ENCODE measurements at regions of chr17 and their contacts with region 1.

Region 1: DNA sequence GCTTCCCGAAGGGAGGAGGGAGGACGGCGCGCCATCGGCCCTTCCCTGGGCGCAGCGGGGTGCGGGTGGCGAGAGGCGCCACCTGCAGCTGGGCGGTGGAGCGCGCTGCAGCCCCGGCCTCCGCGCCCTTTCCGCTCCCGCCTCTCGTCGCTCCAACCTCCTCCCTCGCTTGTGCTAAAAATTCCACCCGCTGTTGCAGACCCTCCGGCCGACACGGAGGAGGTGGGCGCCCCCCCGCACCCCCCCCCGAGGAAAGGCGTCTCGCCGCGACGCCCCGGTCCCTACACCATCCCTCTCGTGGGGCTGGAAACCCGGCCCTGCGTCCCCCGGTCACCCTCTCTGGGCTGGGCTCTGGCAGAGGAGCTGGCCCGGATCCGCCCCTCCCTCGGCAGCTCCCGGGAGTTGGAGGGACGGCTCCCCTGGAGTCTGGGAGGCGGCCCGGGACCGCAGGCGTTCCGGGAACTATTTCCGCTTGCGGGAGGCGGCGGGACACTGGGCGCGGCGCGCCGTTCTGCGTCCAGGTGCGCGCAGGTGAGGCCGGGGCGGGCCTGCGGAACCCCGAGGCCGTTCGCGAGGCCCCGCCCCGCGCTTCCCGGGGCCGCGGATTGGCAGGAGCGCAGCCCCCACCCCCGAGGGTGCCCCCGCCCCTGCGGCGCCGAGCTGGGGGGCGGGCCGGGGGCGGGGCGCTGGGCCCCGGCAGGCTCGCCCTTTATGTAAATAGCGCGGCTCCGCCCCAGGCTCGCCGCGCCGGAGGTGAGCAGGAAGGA is at the start of gene LLGL2:
- DNase-seq: peak; percentile 94
- ATAC-seq: peak; percentile 93
- H3K4me3 ChIP-seq: peak within 1 kb of the TSS; percentile 70
- H3K27ac ChIP-seq: peak within 1 kb of the TSS; percentile 80
- H3K4me1 ChIP-seq: peaks cover 14% of the 10 kb centered on the region
- H3K27me3 ChIP-seq: no peaks in the 10 kb centered on the region
- CTCF ChIP-seq: peak; percentile 58
- total RNA-seq, gene LLGL2: 133 TPM

Region 2: GRCh38 chr17:75589012-75589918 is 64.1 kb after region 1 on chr17:
- intact Hi-C with region 1: loop called (anchors 10 kb)
- DNase-seq: peak; percentile 98
- ATAC-seq: peak; percentile 92
- H3K4me3 ChIP-seq: peak overlapping the region; percentile 74
- H3K27ac ChIP-seq: peak overlapping the region; percentile 96
- H3K4me1 ChIP-seq: peaks cover 15% of the 10 kb centered on the region
- H3K27me3 ChIP-seq: no peaks in the 10 kb centered on the region
- CTCF ChIP-seq: peak; percentile 49

Measured in upper lobe of right lung (tissue), 1 donor.